Panc1 (cell line): ENCODE measurements at regions of chr7 and their contacts with region 1.

Region 1: GRCh38 chr7:129030440-129030839 is 24.5 kb downstream of the TNPO3 start:
- DNase-seq: no peak
- ATAC-seq: no peak
- H3K4me3 ChIP-seq: no peak overlapping the region
- H3K27ac ChIP-seq: no peak overlapping the region
- H3K4me1 ChIP-seq: no peaks in the 10 kb centered on the region
- H3K27me3 ChIP-seq: no peaks in the 10 kb centered on the region
- CTCF ChIP-seq: no peak

Region 2: GRCh38 chr7:129043012-129043411 is 12.6 kb after region 1 on chr7:
- CTCF ChIA-PET with region 1: no interaction called
- POLR2A ChIA-PET with region 1: interaction called, 10 read pairs
- in situ Hi-C with region 1: no loop called
- intact Hi-C with region 1: no loop called
- DNase-seq: no peak
- ATAC-seq: no peak
- H3K4me3 ChIP-seq: no peak overlapping the region
- H3K27ac ChIP-seq: no peak overlapping the region
- H3K4me1 ChIP-seq: peaks cover 3% of the 10 kb centered on the region; the same call in 1 of the 2 replicates
- H3K27me3 ChIP-seq: no peaks in the 10 kb centered on the region
- CTCF ChIP-seq: no peak

Region 3: DNA sequence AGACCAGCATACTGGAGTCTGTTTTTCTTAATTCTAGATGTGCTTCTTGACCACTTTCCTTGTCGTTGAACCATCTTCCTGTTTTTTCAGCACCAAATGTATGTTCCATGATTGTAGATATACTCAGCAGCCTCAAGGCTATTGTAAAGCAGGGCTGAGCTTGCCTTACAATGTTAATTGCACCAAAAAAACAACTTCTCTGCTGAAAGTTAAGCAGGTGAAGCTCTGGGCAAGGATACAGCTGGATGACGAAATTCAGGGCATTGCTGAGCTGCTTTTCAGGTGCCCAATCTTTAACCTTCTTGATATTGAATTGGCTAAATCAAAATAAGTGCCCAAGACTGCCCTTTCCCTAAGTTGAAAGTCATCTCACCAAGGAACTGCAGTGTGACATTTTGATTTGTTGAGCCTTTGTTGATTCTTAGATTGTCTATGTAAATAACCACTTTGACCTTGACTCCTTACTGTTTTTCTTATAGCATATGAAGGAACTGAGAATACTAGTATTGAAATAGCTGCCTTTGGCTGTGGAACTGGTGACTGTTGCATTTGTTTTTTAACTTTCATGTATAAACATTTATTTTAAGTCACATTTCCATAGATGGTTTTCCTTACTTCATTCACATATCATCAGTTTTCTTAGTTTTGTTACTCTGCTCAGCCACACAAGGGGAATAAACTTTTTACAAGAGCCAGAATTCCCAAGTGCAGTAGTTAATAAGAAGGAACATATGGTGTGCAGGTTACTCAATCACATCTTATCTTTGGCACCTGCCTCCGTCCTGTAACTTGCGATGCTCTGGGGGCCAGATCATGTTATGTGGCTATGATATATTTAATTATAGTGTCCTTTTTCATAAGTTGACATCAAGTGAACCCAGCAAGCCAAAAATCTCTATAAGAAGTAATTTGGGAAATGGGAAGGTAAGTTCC is 197.5 kb after region 1 on chr7:
- CTCF ChIA-PET with region 1: no interaction called
- POLR2A ChIA-PET with region 1: no interaction called
- in situ Hi-C with region 1: no loop called
- intact Hi-C with region 1: no loop called
- DNase-seq: no peak
- ATAC-seq: no peak
- H3K4me3 ChIP-seq: no peak overlapping the region
- H3K27ac ChIP-seq: no peak overlapping the region
- H3K4me1 ChIP-seq: peaks cover 16% of the 10 kb centered on the region
- H3K27me3 ChIP-seq: no peaks in the 10 kb centered on the region
- CTCF ChIP-seq: no peak

Region 4: DNA sequence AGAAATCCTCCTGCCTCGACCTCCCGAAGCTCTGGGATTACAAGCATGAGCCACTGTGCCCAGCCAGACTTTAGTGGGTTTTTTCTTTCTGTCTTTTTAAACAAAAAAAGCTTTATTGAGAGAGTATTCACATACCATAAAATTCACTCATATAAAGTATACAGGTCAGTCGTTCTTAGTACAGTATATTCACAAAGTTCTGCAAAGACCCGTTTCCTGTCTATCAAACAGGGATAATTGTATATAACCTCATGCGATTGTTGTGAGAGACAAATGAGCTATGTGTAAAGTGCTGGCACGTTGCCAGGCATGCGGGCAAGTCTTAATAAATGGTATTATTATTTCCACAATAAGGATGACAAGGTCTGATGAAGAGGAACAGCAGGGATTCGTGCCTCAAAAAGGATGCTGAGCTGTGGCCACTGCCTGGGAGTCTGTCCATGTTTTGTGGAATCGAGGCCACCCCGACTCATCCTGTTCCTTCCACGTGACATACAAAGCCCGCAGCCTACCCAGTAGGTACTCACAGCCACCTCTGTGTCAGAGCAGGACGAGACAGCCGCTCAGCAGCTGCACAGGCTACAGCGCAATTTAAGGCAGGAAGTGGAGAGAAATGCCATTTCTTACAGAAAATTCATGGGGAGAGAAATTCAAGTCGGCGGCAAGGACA is 523.6 kb after region 1 on chr7:
- CTCF ChIA-PET with region 1: no interaction called
- POLR2A ChIA-PET with region 1: interaction called, 11 read pairs
- in situ Hi-C with region 1: no loop called
- intact Hi-C with region 1: no loop called
- DNase-seq: no peak
- ATAC-seq: 0 out of 2 replicates have a peak, but pooled peaks have one; percentile 52
- H3K4me3 ChIP-seq: peak overlapping the region in 1 of 2 experiments; percentile 3; a peak in 1 of 4 replicates
- H3K27ac ChIP-seq: no peak overlapping the region
- H3K4me1 ChIP-seq: no peaks in the 10 kb centered on the region
- H3K27me3 ChIP-seq: no peaks in the 10 kb centered on the region
- CTCF ChIP-seq: no peak